CD14-positive monocyte (primary cell): ENCODE measurements at regions of chr16 and their contacts with region 1.

Region 1: GRCh38 chr16:81493755-81494433 is 49.3 kb downstream of the CMIP start:
- DNase-seq: peak; percentile 68 to 88 (median 70)
- H3K4me3 ChIP-seq: no peak overlapping the region
- H3K4me3 Mint-ChIP-seq: no peak overlapping the region
- H3K27ac ChIP-seq: peak overlapping the region; percentile 15 to 46
- H3K27ac Mint-ChIP-seq: peak overlapping the region; percentile 58 to 86 (median 82)
- H3K4me1 ChIP-seq: peaks cover 85 to 100% of the 10 kb centered on the region in 2 donors
- H3K4me1 Mint-ChIP-seq: peaks cover 94% of the 10 kb centered on the region
- H3K27me3 ChIP-seq: no peaks in the 10 kb centered on the region
- H3K27me3 Mint-ChIP-seq: peaks cover 0 to 1% (median under 1%) of the 10 kb centered on the region in 3 donors
- CTCF ChIP-seq: no peak

Region 2: GRCh38 chr16:81461766-81462165 is 32.1 kb before region 1 on chr16:
- intact Hi-C with region 1: loop called in 1 of 2 experiments (anchors 5 kb)
- DNase-seq: peak in 2 of 3 donors; percentile 62 to 66
- H3K4me3 ChIP-seq: peak overlapping the region in 1 of 3 experiments; percentile 31
- H3K4me3 Mint-ChIP-seq: peak overlapping the region in 1 of 2 donors; percentile 7
- H3K27ac ChIP-seq: peak overlapping the region in 1 of 2 donors; percentile 66
- H3K27ac Mint-ChIP-seq: peak overlapping the region in 5 of 7 donors; percentile 28 to 76 (median 69)
- H3K4me1 ChIP-seq: peaks cover 74 to 97% of the 10 kb centered on the region in 2 donors
- H3K4me1 Mint-ChIP-seq: peaks cover 94% of the 10 kb centered on the region
- H3K27me3 ChIP-seq: no peaks in the 10 kb centered on the region
- H3K27me3 Mint-ChIP-seq: peaks cover 0 to 1% (median 0%) of the 10 kb centered on the region in 3 donors
- CTCF ChIP-seq: no peak